Activated T-helper 2 cell treated with anti-CD3 and anti-CD28 coated beads, Interferon-gamma antibody, Interleukin-2, Interleukin-4, amounts not matched to agents 10 μg/mL and 5 μg/mL and 100 μg/mL, durations not matched to agents 14 hours and 24 hours and 36 hours (primary cell): ENCODE measurements at regions of chr11 and their contacts with region 1.

Region 1: GRCh38 chr11:46121724-46122477 is 647 bp upstream of the PHF21A start:
- DNase-seq: peak; percentile 79
- H3K4me3 Mint-ChIP-seq: peak overlapping the region; percentile 83
- H3K27ac Mint-ChIP-seq: peak overlapping the region; percentile 82
- H3K4me1 Mint-ChIP-seq: peaks cover 37% of the 10 kb centered on the region
- H3K27me3 Mint-ChIP-seq: no peaks in the 10 kb centered on the region

Region 2: GRCh38 chr11:44596525-44597276 is 1525.2 kb before region 1 on chr11:
- intact Hi-C with region 1: loop called (anchors 5 kb)
- DNase-seq: peak; percentile 78
- H3K4me3 Mint-ChIP-seq: peak overlapping the region; percentile 71
- H3K27ac Mint-ChIP-seq: peak overlapping the region; percentile 97
- H3K4me1 Mint-ChIP-seq: peaks cover 62% of the 10 kb centered on the region
- H3K27me3 Mint-ChIP-seq: no peaks in the 10 kb centered on the region

Region 3: DNA sequence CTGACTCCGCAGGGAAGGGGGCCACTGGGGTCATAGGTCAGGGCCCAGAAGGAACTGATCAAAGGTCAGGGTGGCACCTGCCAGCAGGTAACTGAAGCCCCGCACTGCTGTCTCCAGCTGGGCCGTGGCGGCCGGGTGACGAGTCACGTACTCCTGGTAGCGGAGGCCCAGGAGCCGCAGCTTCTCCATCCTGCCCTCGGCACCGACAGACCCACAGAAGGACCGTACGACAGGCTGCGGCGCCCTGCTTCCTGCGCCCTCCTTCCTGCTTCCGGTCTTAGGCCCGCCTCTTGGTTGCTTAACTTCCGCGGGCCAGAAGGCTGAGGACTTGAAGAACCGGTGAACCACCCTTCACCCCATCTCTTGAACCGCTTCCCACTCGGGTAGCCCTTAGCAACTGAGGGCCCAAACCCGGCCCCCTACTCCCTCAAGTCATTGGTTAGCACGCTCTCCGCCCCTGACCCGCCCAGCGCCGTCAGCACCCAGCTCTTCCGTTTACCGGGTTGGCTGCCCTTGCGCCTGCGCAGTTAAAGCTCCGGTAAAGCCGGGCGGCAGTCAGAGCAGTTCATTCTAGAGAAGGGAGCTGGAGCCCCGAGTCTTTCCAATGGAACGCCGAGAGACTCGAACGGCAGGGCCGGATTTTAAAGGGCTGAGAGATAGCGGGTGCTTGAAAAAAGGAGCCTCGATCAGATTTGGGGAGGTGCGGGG is 204.1 kb before region 1 on chr11 and contains the start of gene PEX16:
- intact Hi-C with region 1: loop called (anchors 5 kb)
- DNase-seq: peak; percentile 98
- H3K4me3 Mint-ChIP-seq: peak within 1 kb of the TSS; percentile 96
- H3K27ac Mint-ChIP-seq: peak within 1 kb of the TSS; percentile 98
- H3K4me1 Mint-ChIP-seq: peaks cover 22% of the 10 kb centered on the region
- H3K27me3 Mint-ChIP-seq: peaks cover 7% of the 10 kb centered on the region
- total RNA-seq, gene PEX16: 30.8 and 38.5 TPM in 2 replicates

Region 4: GRCh38 chr11:46075168-46075567 is 46.7 kb before region 1 on chr11:
- intact Hi-C with region 1: loop called (anchors 5 kb)
- DNase-seq: no peak
- H3K4me3 Mint-ChIP-seq: no peak overlapping the region
- H3K27ac Mint-ChIP-seq: no peak overlapping the region
- H3K4me1 Mint-ChIP-seq: peaks cover 8% of the 10 kb centered on the region
- H3K27me3 Mint-ChIP-seq: no peaks in the 10 kb centered on the region

Region 5: DNA sequence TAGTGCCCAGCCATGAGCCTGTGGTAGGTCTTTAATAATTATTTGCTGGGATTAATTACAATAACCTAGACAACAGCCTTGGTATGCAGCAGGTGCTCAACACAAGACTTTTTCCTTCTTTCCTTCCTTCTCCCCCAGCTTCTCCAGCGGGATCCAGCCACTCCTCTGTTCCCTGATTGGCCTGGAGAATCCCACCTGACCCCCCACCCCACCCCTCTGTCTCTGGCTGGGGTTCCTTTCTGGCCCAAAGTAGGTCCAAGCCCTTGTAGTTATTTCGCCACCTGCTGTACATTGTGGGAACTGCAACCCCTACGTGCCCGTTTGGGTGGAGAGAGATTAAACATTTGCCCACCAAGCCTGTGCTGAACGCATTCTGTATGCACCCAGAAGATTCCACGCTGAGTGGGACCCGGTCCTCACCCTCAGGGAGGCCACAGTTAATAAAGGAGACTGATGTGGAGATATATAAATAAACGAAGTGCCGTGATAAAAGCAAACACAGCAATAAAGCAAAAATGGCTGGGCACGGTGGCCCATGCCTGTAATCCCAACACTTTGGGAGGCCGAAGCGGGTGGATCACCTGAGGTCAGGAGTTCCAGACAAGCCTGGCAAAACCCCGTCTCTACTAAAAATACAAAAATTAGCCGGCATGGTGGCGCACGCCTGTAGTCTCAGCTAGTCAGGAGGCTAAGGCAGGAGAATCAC is 193.3 kb after region 1 on chr11:
- intact Hi-C with region 1: loop called (anchors 10 kb)
- DNase-seq: peak; percentile 52
- H3K4me3 Mint-ChIP-seq: no peak overlapping the region
- H3K27ac Mint-ChIP-seq: no peak overlapping the region
- H3K4me1 Mint-ChIP-seq: peaks cover 15% of the 10 kb centered on the region
- H3K27me3 Mint-ChIP-seq: no peaks in the 10 kb centered on the region